BJ (cell line): ENCODE measurements at regions of chr14 and their contacts with region 1.

Region 1: DNA sequence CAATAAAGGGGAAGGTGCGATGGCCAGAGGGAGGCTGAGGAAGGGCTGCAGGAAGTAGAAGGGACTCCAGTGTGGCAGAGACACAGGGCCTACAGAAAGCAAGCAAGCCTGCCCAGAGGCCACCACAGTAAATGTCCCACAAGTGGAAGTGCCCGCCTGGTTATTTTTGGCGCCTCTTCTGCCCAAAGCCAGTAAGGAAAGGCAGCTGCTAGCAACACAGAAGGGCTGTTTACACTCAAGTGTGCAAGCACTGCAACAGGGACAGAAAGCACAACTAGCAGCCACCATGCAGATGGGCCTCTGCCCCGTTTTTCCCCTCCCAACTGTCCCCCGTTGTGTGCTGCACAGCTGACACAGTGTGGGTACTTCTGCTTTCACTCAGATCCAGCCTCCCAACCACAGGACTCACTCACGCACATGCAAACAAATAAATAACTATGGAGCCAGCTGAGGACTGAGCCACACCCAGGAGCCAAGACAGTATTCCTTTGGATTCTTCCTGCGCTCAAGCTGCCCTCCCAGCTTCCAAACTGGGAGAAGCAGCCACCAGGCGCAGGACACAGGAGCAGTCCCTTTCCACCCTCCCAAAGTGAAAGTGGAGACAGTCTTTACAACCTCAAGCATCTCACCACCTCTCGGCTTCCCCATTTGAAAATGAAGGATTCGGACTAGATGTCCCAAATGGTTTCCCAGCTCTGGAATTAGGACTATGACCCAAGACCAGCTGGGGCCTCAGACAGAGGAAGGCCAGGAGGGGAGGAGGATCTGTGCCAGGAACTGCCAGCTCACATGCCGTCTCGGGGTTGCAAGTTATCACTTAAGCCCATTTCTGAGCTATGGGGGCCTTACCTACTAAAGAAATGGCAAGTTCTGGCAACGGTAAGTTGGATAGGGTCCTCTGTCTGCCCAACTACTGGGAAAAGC is 40.0 kb upstream of the PNMA1 start:
- DNase-seq: no peak
- H3K4me3 ChIP-seq: peak overlapping the region; percentile 9; the same call in 1 of the 2 replicates
- H3K27me3 ChIP-seq: no peaks in the 10 kb centered on the region
- CTCF ChIP-seq: no peak

Region 2: GRCh38 chr14:73741386-73741875 is 12.8 kb before region 1 on chr14:
- CTCF ChIA-PET with region 1: interaction called, 23 read pairs
- POLR2A ChIA-PET with region 1: interaction called, 3 read pairs
- DNase-seq: no peak
- H3K4me3 ChIP-seq: peak overlapping the region; percentile 17
- H3K27me3 ChIP-seq: no peaks in the 10 kb centered on the region
- CTCF ChIP-seq: 0 out of 2 replicates have a peak, but pooled peaks have one; percentile 6

Region 3: GRCh38 chr14:73785873-73786695 is 31.9 kb after region 1 on chr14:
- CTCF ChIA-PET with region 1: interaction called, 23 read pairs
- POLR2A ChIA-PET with region 1: interaction called, 8 read pairs
- DNase-seq: peak; percentile 56
- H3K4me3 ChIP-seq: peak overlapping the region; percentile 57
- H3K27me3 ChIP-seq: no peaks in the 10 kb centered on the region
- CTCF ChIP-seq: peak; percentile 42

Region 4: DNA sequence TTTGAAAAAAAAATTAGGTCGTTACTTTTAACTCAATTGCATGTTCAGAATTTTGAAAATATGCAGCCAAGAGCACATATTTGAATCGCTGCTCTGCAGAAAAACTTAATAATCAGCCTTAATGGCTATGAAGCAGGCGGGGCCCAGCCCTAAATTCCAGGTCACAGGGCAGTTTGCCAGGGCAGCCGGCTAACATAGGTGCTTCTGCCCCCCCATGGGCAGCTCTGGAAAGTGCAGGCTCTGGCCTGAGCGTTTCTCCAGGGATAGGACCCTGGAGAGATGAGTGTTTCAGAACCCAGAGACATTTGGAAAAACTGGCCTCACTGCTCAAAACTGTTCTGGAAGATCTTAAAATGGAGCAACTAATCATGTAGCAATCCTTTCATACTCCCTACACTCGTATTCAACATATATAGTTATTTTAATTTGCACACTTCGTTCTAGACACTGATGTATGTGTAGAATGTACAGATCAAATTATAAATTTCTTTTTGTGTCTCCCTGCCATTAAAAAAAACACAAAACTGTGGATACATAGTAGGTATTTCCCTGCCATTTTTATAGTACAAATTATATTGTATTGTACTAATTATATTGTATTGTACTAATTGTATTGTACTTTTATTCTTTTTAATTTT is 71.4 kb after region 1 on chr14:
- CTCF ChIA-PET with region 1: interaction called, 20 read pairs
- POLR2A ChIA-PET with region 1: interaction called, 5 read pairs
- DNase-seq: no peak
- H3K4me3 ChIP-seq: no peak overlapping the region
- H3K27me3 ChIP-seq: no peaks in the 10 kb centered on the region
- CTCF ChIP-seq: peak; percentile 92